H1 (cell line): ENCODE measurements at regions of chr9 and their contacts with region 1.

Region 1: DNA sequence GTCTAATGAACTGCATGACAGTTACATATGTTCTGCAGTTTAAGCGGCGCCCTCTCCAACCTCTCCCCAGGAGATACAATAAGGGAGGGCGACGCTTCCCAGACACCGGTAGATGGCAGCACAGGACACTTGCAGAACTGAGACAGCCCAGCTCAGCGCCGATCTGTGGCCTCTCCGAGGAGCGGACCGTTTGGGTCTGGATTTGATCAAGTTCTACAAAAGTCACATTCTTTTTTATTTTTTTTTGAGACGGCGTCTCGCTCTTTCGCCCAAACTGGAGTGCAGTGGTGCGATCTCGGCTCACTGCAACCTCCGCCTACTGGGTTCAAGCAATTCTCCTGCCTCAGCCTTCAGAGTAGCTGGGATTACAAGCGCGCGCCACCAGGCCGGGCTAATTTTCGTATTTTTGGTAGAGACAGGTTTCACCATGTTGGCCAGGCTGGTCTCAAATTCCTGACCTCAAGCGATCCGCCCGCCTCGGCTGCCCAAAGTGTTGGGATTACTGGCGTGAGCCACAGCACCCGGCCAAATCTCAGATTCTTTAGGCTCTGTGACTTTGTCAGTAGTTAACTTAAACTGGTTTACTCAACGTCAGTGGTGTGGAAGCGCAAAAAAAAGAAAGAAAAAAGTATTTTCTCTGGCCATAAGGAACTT is 1.4 kb upstream of the ATOSB start:
- DNase-seq: peak; percentile 83 to 87
- H3K4me3 ChIP-seq: peak overlapping the region; percentile 49 to 79 (median 65); a peak in 7 of 8 replicates
- H3K27ac ChIP-seq: no peak overlapping the region
- H3K4me1 ChIP-seq: peaks cover 4 to 19% (median 10%) of the 10 kb centered on the region in 4 experiments; a peak in 6 of 7 replicates
- H3K27me3 ChIP-seq: no peaks in the 10 kb centered on the region
- CTCF ChIP-seq: peak; percentile 90 to 98 (median 90)
- EP300 ChIP-seq: no peak
- POLR2A ChIP-seq: peak in 1 of 2 experiments; percentile 51; a peak in 1 of 3 replicates
- RAD21 ChIP-seq: peak; percentile 93 to 95

Region 2: GRCh38 chr9:35089434-35089833 is 27.6 kb before region 1 on chr9:
- CTCF ChIA-PET with region 1: no interaction called
- POLR2A ChIA-PET with region 1: no interaction called
- DNase-seq: no peak
- H3K4me3 ChIP-seq: no peak overlapping the region
- H3K27ac ChIP-seq: no peak overlapping the region
- H3K4me1 ChIP-seq: no peaks in the 10 kb centered on the region
- H3K27me3 ChIP-seq: no peaks in the 10 kb centered on the region
- CTCF ChIP-seq: no peak
- EP300 ChIP-seq: no peak
- POLR2A ChIP-seq: no peak
- RAD21 ChIP-seq: no peak

Region 3: DNA sequence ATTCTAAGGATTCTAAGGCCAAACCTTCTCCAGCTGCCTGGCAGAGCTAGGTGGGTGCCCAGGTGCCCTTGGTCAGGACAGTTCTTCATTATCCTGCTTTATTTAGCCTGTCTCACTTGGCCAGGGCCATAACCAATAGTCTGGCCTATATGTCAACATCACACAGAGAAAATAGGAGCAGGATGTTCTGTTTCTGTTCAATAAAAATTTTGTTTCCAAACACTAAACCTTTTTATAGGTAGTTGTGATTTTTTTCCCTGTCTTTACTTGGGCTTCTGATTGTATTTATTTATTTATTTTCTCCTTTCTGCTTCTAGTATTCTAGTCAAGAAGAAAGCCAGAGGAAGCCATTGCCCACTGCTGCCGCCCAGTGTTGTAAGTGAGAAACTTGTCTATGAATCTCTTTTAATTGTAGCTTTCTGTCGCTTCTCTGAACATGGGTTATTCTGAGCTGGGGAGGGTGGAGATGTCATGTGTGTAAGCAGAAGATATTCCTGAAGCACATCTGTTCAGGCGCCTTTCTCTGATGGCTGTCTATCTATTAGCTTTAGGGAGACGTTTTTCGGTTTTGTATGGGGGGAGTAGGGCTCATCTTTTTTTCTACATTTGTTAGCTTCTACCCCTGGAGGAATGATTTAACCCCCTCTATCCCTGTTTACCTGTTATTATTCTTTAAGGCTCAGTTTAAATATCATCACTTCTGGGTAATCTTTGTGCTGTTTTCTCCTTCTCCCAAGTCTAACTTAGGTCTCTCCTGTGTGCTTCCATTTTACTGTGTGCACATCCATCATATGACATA is 141.8 kb after region 1 on chr9:
- CTCF ChIA-PET with region 1: interaction called, 26 read pairs
- POLR2A ChIA-PET with region 1: interaction called, 3 read pairs
- DNase-seq: no peak
- H3K4me3 ChIP-seq: no peak overlapping the region
- H3K27ac ChIP-seq: no peak overlapping the region
- H3K4me1 ChIP-seq: peaks cover 0 to 3% (median 0%) of the 10 kb centered on the region in 4 experiments; a peak in 1 of 7 replicates
- H3K27me3 ChIP-seq: no peaks in the 10 kb centered on the region; a peak in 1 of 7 replicates
- CTCF ChIP-seq: peak in 2 of 3 experiments; percentile 66 to 73; a peak in 3 of 4 replicates
- EP300 ChIP-seq: no peak
- POLR2A ChIP-seq: no peak
- RAD21 ChIP-seq: peak; percentile 75 to 85